Activated CD8-positive, alpha-beta T cell treated with anti-CD3 and anti-CD28 coated beads for 36 hours (primary cell): ENCODE measurements at regions of chr12 and their contacts with region 1.

Region 1: DNA sequence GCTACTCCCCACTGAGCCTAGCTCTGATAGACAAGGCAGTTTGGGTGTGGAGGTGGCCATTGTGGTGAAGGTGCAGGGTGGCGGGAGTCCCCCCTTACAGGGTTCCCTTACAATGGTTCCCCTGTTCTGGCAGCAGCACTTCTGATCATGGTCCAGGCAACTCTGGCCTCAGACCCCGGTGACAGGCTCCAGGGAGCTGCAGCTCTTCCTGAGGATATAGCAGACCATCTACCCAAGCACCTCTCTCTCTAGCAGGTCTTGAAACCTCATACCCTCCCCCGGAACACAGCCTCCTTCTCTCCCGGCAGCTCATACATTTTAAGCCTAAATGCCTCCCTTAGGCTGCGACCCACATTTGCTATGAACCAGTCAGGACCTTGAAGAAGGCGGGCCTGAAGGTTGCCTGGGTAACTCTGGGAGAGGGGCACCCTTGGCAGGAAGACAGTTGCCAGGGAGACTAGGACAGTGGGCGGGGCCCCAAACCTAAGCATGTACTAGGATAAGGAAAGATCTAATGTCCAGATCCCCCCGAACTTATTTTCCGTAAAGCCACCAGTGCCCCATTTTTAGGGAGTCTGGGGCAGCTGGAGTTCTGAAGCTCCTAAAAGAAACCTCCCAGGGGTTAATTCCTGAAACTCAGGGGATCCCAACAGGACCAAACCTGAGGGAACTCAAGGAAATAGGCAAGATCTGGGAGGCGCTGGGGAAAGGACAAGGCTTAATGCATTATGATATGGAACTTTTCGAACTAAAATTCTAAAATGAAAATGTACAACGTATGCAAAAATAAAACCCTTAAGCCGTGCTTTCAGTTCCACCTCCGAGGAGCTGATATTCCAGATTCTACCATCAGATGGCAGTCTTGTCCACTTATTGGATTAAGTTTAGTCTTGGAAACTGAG is 4.5 kb upstream of the GDF11 start:
- DNase-seq: peak; percentile 92
- ATAC-seq: peak; percentile 88
- H3K4me3 Mint-ChIP-seq: peak overlapping the region; percentile 72
- H3K27ac Mint-ChIP-seq: peak overlapping the region; percentile 92
- H3K4me1 Mint-ChIP-seq: peaks cover 25% of the 10 kb centered on the region
- H3K27me3 Mint-ChIP-seq: no peaks in the 10 kb centered on the region
- CTCF ChIP-seq: peak; percentile 93

Region 2: DNA sequence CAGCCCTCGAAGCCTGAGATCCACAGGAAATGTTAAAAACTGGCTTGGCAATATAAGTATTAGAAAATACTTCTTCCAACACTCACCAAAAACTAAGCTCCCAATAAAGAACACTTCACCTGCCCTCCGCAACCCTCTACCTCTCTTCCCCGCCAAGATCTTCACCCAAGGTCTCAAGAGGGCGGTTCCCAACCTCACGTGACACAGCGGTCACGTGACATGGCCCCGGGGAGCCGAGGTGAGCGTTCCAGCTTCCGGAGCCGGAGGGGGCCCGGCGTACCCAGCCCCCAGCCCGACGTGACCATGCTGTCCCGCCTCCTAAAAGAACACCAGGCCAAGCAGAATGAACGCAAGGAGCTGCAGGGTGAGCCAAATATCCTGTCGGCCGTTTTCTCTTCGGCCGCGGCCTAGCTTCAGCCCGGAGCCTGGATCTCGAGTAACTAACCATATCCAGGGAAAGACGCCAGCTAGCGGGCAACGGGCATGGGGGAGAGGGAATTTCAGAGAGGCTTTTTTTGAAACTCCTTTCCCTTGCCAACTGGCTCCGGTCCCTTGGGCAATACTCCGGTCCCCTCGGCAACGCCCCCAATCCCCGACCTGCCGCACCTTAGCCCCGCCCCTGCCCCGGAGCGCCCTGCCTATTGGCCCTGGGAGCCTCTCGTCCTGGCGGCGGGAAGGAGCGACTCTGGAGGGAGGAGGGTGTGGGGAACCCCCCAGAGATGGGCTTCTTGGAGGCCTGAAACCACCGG is 22.4 kb before region 1 on chr12 and contains the start of gene BLOC1S1:
- CTCF ChIA-PET with region 1: interaction called, 87 read pairs
- POLR2A ChIA-PET with region 1: interaction called, 12 read pairs
- intact Hi-C with region 1: no loop called
- DNase-seq: peak; percentile 97
- ATAC-seq: peak; percentile 97
- H3K4me3 Mint-ChIP-seq: peak within 1 kb of the TSS; percentile 94
- H3K27ac Mint-ChIP-seq: peak within 1 kb of the TSS; percentile 92
- H3K4me1 Mint-ChIP-seq: peaks cover 24% of the 10 kb centered on the region
- H3K27me3 Mint-ChIP-seq: peaks cover 3% of the 10 kb centered on the region
- CTCF ChIP-seq: no peak
- total RNA-seq, gene BLOC1S1: 79.0 to 84.6 TPM

Region 3: GRCh38 chr12:55771736-55772135 is 33.4 kb after region 1 on chr12:
- CTCF ChIA-PET with region 1: interaction called, 25 read pairs
- POLR2A ChIA-PET with region 1: interaction called, 3 read pairs
- intact Hi-C with region 1: no loop called
- DNase-seq: no peak
- ATAC-seq: no peak
- H3K4me3 Mint-ChIP-seq: no peak overlapping the region
- H3K27ac Mint-ChIP-seq: peak overlapping the region; percentile 8
- H3K4me1 Mint-ChIP-seq: peaks cover 6% of the 10 kb centered on the region
- H3K27me3 Mint-ChIP-seq: no peaks in the 10 kb centered on the region
- CTCF ChIP-seq: no peak

Region 4: DNA sequence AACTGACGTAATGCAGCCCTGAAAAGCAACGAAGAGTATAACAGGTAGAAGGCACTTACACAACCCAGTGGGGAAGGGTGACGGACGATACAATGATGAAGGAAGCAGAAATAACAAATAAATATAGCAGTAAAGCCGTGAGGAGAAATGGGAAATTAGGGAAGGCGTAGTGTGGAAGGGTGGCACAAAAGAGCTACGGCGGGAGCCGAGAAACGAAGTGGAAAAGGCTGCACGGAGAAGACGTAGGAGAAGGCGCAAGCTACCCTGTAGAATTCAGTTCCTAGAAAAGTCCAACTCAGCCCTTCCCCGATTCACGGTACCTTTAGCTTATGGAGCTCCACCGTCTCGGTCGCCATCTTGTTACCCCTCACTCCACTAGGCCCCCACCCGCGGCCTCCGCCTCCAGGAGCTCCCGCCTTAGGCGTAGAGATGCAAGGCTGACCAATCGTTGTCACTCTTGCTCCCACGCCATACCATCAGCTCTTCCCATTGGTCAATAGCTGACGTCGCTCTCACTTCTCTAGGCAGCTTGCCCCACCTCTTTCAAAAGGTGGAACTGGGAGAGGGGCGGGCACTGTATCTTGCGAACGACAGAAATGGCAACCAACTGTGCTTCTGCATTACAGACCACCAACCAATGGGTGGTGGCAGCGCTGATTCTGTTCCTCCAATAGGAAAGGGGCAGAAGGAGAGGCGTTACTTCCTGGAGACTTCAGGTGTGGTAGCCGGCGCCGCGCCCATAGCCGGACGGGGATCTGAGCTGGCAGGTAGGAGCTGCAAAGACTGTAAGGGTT is 79.2 kb after region 1 on chr12 and contains the starts of genes ORMDL2 and SARNP:
- CTCF ChIA-PET with region 1: interaction called, 30 read pairs
- POLR2A ChIA-PET with region 1: no interaction called
- intact Hi-C with region 1: loop called (anchors 5 kb)
- DNase-seq: peak; percentile 99
- ATAC-seq: peak; percentile 97
- H3K4me3 Mint-ChIP-seq: no peak within 1 kb of the TSS
- H3K27ac Mint-ChIP-seq: no peak within 1 kb of the TSS
- H3K4me1 Mint-ChIP-seq: peaks cover 40% of the 10 kb centered on the region
- H3K27me3 Mint-ChIP-seq: no peaks in the 10 kb centered on the region
- CTCF ChIP-seq: no peak
- total RNA-seq, gene ORMDL2: 24.2 to 27.0 TPM
- total RNA-seq, gene SARNP: 93.9 to 94.0 TPM

Region 5: GRCh38 chr12:55931780-55932550 is 193.6 kb after region 1 on chr12:
- CTCF ChIA-PET with region 1: interaction called, 23 read pairs
- POLR2A ChIA-PET with region 1: interaction called, 13 read pairs
- intact Hi-C with region 1: loop called (anchors 5 kb)
- DNase-seq: peak; percentile 44
- ATAC-seq: no peak
- H3K4me3 Mint-ChIP-seq: peak overlapping the region; percentile 99
- H3K27ac Mint-ChIP-seq: peak overlapping the region; percentile 99
- H3K4me1 Mint-ChIP-seq: peaks cover 52% of the 10 kb centered on the region
- H3K27me3 Mint-ChIP-seq: no peaks in the 10 kb centered on the region
- CTCF ChIP-seq: no peak

Region 6: GRCh38 chr12:55982319-55982936 is 244.1 kb after region 1 on chr12:
- CTCF ChIA-PET with region 1: interaction called, 14 read pairs
- POLR2A ChIA-PET with region 1: no interaction called
- intact Hi-C with region 1: loop called (anchors 10 kb)
- DNase-seq: no peak
- ATAC-seq: no peak
- H3K4me3 Mint-ChIP-seq: no peak overlapping the region
- H3K27ac Mint-ChIP-seq: peak overlapping the region; percentile 30
- H3K4me1 Mint-ChIP-seq: peaks cover 10% of the 10 kb centered on the region
- H3K27me3 Mint-ChIP-seq: no peaks in the 10 kb centered on the region
- CTCF ChIP-seq: no peak

Region 7: DNA sequence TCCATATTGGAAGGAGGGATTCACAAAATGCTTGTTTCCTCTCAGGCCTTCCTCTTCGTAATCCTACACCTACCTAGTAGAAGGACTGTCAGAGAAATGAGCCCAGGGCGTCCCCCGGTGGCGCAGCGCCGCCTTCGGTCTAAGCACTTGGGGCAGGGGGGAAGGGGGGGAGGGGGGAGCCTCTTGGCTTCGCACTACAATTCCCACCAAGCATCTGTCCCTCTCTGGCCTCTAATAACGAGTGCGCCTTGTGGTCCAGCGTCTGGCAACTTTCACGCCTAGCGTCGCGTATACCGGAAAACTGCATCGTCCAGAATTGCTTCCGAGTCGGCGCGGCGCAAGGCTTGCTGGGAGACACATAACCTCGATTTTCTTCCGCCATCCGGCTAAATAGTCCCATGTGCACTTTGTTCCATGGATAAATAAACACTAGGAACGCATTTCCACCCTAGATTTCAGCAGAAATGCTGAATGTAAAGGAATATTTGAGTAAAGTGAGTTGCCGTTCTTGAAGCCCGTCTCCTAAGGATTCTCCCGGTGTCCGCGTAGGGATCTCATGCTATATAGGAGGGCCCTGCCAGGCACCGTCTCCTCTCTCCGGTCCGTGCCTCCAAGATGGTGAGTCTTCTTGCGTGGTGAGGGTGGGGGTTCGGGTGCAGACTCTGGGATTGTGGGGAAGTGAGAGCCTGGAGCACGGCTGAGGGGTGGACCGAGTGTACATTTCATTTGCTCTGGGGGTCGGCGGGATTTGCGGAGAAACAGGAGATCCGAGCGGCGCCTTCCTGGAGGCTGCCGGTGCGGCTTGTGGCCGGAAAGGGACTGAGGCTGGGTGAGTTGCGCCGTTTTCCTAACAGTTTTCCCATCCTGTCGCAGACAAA is 303.4 kb after region 1 on chr12 and contains the start of gene RPS26:
- CTCF ChIA-PET with region 1: interaction called, 21 read pairs
- POLR2A ChIA-PET with region 1: interaction called, 10 read pairs
- intact Hi-C with region 1: loop called (anchors 2 kb)
- DNase-seq: peak; percentile 97
- ATAC-seq: peak; percentile 90
- H3K4me3 Mint-ChIP-seq: peak within 1 kb of the TSS; percentile 84
- H3K27ac Mint-ChIP-seq: peak within 1 kb of the TSS; percentile 92
- H3K4me1 Mint-ChIP-seq: peaks cover 52% of the 10 kb centered on the region
- H3K27me3 Mint-ChIP-seq: no peaks in the 10 kb centered on the region
- CTCF ChIP-seq: peak; percentile 57
- total RNA-seq, gene RPS26: 29.7 to 29.8 TPM